ENCODE measurements at regions of chr6 and their contacts with region 1.

Region 1: GRCh38 chr6:41779793-41780545 is at the start of gene FRS3:
- DNase-seq: peak; percentile 96 to 99
- H3K4me3 ChIP-seq: peak within 1 kb of the TSS; percentile 82
- H3K4me3 Mint-ChIP-seq: peak within 1 kb of the TSS; percentile 88
- H3K27ac Mint-ChIP-seq: peak within 1 kb of the TSS; percentile 74
- H3K4me1 ChIP-seq: 0 out of 2 replicates have a peak, but pooled peaks cover 3% of the 10 kb centered on the region
- H3K4me1 Mint-ChIP-seq: peaks cover 18% of the 10 kb centered on the region
- H3K27me3 ChIP-seq: no peaks in the 10 kb centered on the region
- H3K27me3 Mint-ChIP-seq: no peaks in the 10 kb centered on the region
- CTCF ChIP-seq: peak; percentile 85 to 96
- total RNA-seq, gene FRS3: 4.1 and 4.3 TPM in 2 replicates

Region 2: GRCh38 chr6:41735427-41736356 is 44.3 kb before region 1 on chr6 and contains the start of gene TFEB:
- CTCF ChIA-PET with region 1: interaction called, 5 read pairs
- POLR2A ChIA-PET with region 1: interaction called, 9 read pairs
- intact Hi-C with region 1: loop called (anchors 1 kb)
- DNase-seq: peak; percentile 92 to 95
- H3K4me3 ChIP-seq: peak within 1 kb of the TSS; percentile 62
- H3K4me3 Mint-ChIP-seq: peak within 1 kb of the TSS; percentile 75
- H3K27ac Mint-ChIP-seq: peak within 1 kb of the TSS; percentile 61
- H3K4me1 ChIP-seq: peaks cover 38% of the 10 kb centered on the region
- H3K4me1 Mint-ChIP-seq: peaks cover 15% of the 10 kb centered on the region
- H3K27me3 ChIP-seq: no peaks in the 10 kb centered on the region
- H3K27me3 Mint-ChIP-seq: no peaks in the 10 kb centered on the region
- CTCF ChIP-seq: peak; percentile 87 to 88
- total RNA-seq, gene TFEB: 3.8 and 3.9 TPM in 2 replicates

Region 3: DNA sequence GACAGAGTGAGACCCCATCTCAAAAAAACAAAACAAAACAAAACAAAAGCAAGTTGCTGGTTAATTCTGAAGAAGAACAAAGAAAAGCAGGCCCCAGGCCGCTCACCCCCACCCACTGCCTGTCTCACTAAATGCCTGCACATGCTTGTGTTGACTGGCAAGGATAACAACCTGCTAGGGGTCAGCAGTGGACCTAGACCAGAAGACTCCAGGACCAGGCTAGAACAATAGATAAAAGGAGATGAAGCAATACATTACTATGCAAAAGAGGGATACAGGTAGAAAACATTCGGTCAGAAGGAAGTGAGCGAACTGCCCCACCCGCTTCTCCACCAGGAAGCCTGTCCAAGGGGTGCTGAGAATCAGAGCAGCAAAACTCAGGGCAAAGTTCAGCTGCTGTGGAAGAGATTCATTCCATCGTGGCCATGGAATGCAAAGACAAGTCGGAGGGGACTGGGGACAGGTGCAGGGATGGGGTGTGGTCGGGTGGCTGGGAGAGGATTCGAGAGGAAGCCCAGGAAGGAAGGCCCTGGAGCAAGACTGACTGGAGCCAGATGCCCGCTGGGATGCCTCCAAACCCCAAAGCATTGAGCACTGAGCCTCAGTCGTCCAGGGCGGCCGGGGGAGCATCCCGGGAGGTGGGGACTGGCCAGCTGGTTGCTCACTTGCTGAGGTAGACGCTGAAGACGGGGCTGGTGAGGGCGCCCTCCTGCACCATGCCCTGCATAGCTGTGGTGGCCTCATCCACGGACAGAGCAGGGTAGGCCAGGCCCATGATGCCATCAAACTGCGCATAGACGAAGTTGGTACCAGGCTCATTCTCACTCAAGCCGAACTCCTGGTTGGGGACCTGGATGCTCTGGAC is 38.1 kb before region 1 on chr6:
- CTCF ChIA-PET with region 1: no interaction called
- POLR2A ChIA-PET with region 1: no interaction called
- intact Hi-C with region 1: loop called (anchors 1 kb)
- DNase-seq: peak; percentile 92 to 96
- H3K4me3 ChIP-seq: no peak overlapping the region
- H3K4me3 Mint-ChIP-seq: peak overlapping the region; percentile 3
- H3K27ac Mint-ChIP-seq: peak overlapping the region; percentile 92
- H3K4me1 ChIP-seq: peaks cover 54% of the 10 kb centered on the region
- H3K4me1 Mint-ChIP-seq: peaks cover 34% of the 10 kb centered on the region
- H3K27me3 ChIP-seq: no peaks in the 10 kb centered on the region
- H3K27me3 Mint-ChIP-seq: no peaks in the 10 kb centered on the region
- CTCF ChIP-seq: peak in 1 of 2 experiments; percentile 43

Measured in Caco-2 (cell line).